CD8-positive, alpha-beta memory T cell (primary cell): ENCODE measurements at regions of chr16 and their contacts with region 1.

Region 1: GRCh38 chr16:81095953-81096717 is at the start of gene GCSH:
- DNase-seq: peak; percentile 98 to 99 (median 99)
- H3K4me3 ChIP-seq: peak within 1 kb of the TSS; percentile 56
- H3K4me3 Mint-ChIP-seq: peak within 1 kb of the TSS; percentile 72 to 89 (median 85)
- H3K27ac ChIP-seq: peak within 1 kb of the TSS; percentile 57
- H3K27ac Mint-ChIP-seq: peak within 1 kb of the TSS; percentile 1 to 92 (median 65)
- H3K4me1 ChIP-seq: peaks cover 9% of the 10 kb centered on the region
- H3K4me1 Mint-ChIP-seq: peaks cover 5 to 17% (median 7%) of the 10 kb centered on the region in 3 donors
- H3K27me3 ChIP-seq: no peaks in the 10 kb centered on the region
- H3K27me3 Mint-ChIP-seq: no peaks in the 10 kb centered on the region
- total RNA-seq, gene GCSH: 23.4 to 26.0 TPM

Region 2: GRCh38 chr16:81106811-81107503 is 10.8 kb after region 1 on chr16:
- CTCF ChIA-PET with region 1: no interaction called
- POLR2A ChIA-PET with region 1: no interaction called
- DNase-seq: no peak
- H3K4me3 ChIP-seq: no peak overlapping the region
- H3K4me3 Mint-ChIP-seq: no peak overlapping the region
- H3K27ac ChIP-seq: no peak overlapping the region
- H3K27ac Mint-ChIP-seq: peak overlapping the region in 1 of 8 donors; percentile 32
- H3K4me1 ChIP-seq: no peaks in the 10 kb centered on the region
- H3K4me1 Mint-ChIP-seq: no peaks in the 10 kb centered on the region
- H3K27me3 ChIP-seq: no peaks in the 10 kb centered on the region
- H3K27me3 Mint-ChIP-seq: peaks cover 2 to 31% of the 10 kb centered on the region in 2 donors

Region 3: GRCh38 chr16:81808933-81809496 is 712.9 kb after region 1 on chr16:
- CTCF ChIA-PET with region 1: no interaction called
- POLR2A ChIA-PET with region 1: interaction called, 12 read pairs
- DNase-seq: peak in 1 of 5 donors; percentile 60
- H3K4me3 ChIP-seq: no peak overlapping the region
- H3K4me3 Mint-ChIP-seq: peak overlapping the region in 1 of 7 donors; percentile 10
- H3K27ac ChIP-seq: no peak overlapping the region
- H3K27ac Mint-ChIP-seq: peak overlapping the region; percentile 30 to 94 (median 66)
- H3K4me1 ChIP-seq: peaks cover 5% of the 10 kb centered on the region
- H3K4me1 Mint-ChIP-seq: peaks cover 26 to 64% (median 36%) of the 10 kb centered on the region in 3 donors
- H3K27me3 ChIP-seq: no peaks in the 10 kb centered on the region
- H3K27me3 Mint-ChIP-seq: no peaks in the 10 kb centered on the region